Posterior vena cava (tissue), 2 donors: ENCODE measurements at regions of chr18 and their contacts with region 1.

Region 1: DNA sequence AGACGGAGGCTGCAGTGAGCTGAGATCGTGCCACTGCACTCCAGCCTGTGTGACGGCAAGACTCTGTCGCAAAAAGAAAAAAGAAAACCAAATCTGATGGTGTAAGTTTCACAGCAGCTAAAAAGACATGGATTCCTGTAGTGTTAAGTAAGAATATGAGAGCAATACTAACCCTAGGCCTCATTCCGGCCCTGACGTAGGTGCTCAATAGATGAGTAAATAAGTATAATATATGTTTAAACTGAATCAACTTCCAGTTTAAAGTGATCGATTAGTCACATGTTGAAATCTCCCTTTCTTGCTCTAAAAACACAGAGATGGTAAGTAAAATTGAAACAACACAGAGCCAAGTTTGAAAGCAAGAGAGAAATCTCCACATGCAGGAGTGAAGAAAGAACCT is 8.0 kb downstream of the ME2 start:
- DNase-seq: no peak

Region 2: GRCh38 chr18:51025512-51026040 is 138.6 kb after region 1 on chr18:
- intact Hi-C with region 1: loop called in 1 of 2 experiments (anchors 2 kb)
- DNase-seq: no peak